HepG2 (cell line): ENCODE measurements at regions of chr1 and their contacts with region 1.

Region 1: GRCh38 chr1:234188454-234188792 is 184.8 kb upstream of the COA6 start:
- DNase-seq: peak; percentile 34
- ATAC-seq: peak; percentile 57
- H3K4me3 ChIP-seq: no peak overlapping the region
- H3K27ac ChIP-seq: no peak overlapping the region
- H3K4me1 ChIP-seq: no peaks in the 10 kb centered on the region
- H3K27me3 ChIP-seq: peaks cover 0 to 4% of the 10 kb centered on the region in 2 experiments; a peak in 3 of 5 replicates
- CTCF ChIP-seq: peak; percentile 45
- EP300 ChIP-seq: no peak
- POLR2A ChIP-seq: no peak
- RAD21 ChIP-seq: no peak

Region 2: DNA sequence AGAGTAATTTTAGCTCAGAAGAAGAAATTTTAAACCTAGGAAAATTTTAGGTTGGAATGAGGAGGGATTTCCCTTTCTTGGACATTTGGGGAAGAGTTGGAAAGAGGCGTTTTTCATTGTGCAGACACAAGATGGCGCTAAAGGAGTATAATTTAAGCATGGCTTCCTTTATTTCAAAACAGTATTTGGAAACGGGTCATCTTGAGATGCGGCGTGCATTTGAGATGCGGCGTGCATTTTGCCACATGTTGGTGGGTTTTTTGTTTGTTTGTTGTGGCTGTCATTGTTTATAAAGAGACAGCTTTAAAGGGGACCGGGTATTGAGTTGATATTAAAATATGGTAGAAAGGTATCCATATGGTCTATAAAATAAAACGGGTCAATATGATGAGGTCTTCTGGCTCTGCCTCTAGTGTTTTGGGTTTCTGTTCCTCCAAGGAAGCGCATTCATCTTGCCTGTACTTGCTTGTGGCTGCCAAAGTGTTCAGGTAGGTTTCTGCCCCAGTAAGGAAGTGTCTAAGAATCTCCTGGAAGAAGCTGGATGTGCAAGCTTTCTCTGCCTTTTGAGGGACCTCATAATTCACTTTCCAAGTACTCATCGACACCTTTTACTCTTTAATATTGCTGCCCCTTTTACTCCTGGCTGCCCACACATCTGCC is 73.6 kb before region 1 on chr1:
- CTCF ChIA-PET with region 1: no interaction called
- POLR2A ChIA-PET with region 1: no interaction called
- in situ Hi-C with region 1: no loop called
- intact Hi-C with region 1: loop called (anchors 2 kb)
- DNase-seq: peak; percentile 22
- ATAC-seq: no peak
- H3K4me3 ChIP-seq: no peak overlapping the region
- H3K27ac ChIP-seq: no peak overlapping the region
- H3K4me1 ChIP-seq: peaks cover 14% of the 10 kb centered on the region
- H3K27me3 ChIP-seq: peaks cover 0 to 4% of the 10 kb centered on the region in 2 experiments; a peak in 3 of 5 replicates
- CTCF ChIP-seq: peak; percentile 71
- EP300 ChIP-seq: no peak
- POLR2A ChIP-seq: no peak
- RAD21 ChIP-seq: no peak

Region 3: DNA sequence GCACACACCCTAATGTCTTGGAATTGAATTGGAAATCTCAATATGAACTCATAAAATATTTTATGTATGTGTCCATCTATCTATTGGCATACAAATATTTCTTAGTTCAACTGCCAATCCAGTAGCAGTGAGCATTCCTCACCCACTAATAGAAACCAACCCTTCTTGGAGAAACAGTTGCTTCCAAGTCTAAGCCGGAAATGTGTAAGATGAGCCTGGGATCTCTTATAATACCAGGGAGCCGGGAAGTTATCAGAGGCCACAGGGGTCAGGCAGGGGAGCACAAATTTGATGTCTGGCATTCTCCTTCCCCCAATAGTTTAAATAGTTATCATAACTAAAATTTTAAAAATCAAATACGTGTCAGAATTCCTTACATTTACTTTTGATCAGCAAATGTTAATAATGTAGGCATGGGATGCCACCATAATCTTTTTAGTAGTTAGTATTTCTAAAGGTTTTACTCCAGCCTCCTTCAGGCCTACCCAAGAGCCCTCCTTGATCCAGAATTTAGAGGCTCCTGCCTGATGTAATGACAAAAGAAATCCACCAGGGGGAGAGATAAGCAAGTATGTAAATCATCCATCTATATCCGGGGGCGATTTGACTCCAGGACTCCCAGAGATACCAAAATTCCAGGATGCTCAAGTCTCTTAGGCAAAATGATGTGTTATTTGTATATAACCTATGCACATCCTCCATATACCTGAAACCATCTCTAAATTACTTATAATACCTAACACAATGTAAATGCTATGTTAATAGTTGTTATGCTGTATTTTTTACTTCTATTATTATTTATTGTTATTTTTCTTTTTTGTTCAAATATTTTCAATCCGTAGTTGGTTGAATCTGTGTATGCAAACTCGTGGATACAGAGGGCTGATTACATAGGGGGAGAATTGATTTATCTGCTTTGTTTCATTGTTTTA is 33.8 kb before region 1 on chr1:
- CTCF ChIA-PET with region 1: no interaction called
- POLR2A ChIA-PET with region 1: no interaction called
- in situ Hi-C with region 1: no loop called
- intact Hi-C with region 1: loop called (anchors 1 kb)
- DNase-seq: peak; percentile 68
- ATAC-seq: peak; percentile 81
- H3K4me3 ChIP-seq: no peak overlapping the region
- H3K27ac ChIP-seq: no peak overlapping the region
- H3K4me1 ChIP-seq: no peaks in the 10 kb centered on the region
- H3K27me3 ChIP-seq: no peaks in the 10 kb centered on the region
- CTCF ChIP-seq: peak; percentile 67
- EP300 ChIP-seq: no peak
- POLR2A ChIP-seq: no peak
- RAD21 ChIP-seq: peak; percentile 41; the same call in 1 of the 2 replicates